ENCODE measurements at regions of chr10 and their contacts with region 1.

Region 1: DNA sequence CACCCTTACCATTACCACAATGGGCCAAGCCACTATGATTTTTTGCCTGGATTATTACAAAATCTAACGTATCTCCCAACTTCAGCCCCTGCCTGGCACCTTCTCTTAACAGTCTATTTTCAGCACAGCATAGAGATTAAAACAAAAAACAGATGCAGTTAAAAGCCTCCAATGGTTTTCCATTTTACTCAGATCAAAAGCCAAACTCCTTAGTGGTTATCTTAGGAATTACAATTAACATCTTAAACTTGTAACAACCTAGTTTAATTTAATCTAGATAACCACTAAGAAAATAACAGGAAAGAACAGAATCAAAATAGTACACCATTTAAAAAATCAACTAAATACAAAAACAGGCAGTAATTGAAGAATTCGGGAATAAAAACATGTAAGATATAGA is 43.5 kb downstream of the DNAJC1 start:
- DNase-seq: no peak
- H3K4me3 ChIP-seq: no peak overlapping the region
- H3K27ac ChIP-seq: no peak overlapping the region
- H3K4me1 ChIP-seq: no peaks in the 10 kb centered on the region
- H3K27me3 ChIP-seq: no peaks in the 10 kb centered on the region
- CTCF ChIP-seq: no peak

Region 2: GRCh38 chr10:21278491-21279239 is 681.3 kb before region 1 on chr10:
- intact Hi-C with region 1: loop called (anchors 5 kb)
- DNase-seq: peak; percentile 93
- H3K4me3 ChIP-seq: no peak overlapping the region
- H3K27ac ChIP-seq: no peak overlapping the region
- H3K4me1 ChIP-seq: no peaks in the 10 kb centered on the region
- H3K27me3 ChIP-seq: no peaks in the 10 kb centered on the region
- CTCF ChIP-seq: peak; percentile 66

Region 3: DNA sequence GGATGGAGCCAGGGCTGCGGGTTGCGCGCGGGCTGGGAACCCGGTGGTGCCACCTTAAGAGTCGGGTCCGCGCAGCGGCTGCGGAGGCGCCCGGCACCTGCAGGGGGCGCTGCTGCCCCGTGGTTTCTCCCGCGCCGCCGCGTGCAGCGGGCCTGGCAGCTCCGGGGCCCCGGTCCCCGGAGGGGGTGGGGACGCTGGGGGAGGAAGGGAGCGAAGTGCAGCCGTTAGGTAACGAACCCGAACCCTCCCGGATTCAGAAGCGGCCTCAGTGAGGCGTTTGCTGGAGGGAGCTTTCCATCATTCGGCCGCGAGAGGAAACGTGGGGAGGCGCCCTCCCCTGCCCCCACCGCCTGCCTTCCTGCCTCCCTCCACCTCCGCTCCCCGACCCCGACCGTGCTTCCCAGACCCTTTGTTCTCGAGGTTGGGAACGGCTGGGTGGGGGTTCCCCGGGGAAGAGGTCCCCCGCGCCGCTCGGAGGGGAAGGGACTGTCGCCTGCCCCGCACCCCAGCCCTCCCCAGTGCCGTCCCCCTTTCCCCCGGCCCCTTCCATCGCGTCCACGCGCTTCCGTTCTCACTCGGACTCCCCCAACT is 464.2 kb before region 1 on chr10:
- intact Hi-C with region 1: no loop called
- DNase-seq: peak; percentile 82
- H3K4me3 ChIP-seq: peak overlapping the region; percentile 68
- H3K27ac ChIP-seq: no peak overlapping the region
- H3K4me1 ChIP-seq: peaks cover 6% of the 10 kb centered on the region
- H3K27me3 ChIP-seq: peaks cover 48% of the 10 kb centered on the region
- CTCF ChIP-seq: peak; percentile 95

Measured in colonic mucosa (tissue), 4 donors.